Heart left ventricle (tissue), 16 donors: ENCODE measurements at regions of chr22 and their contacts with region 1.

Region 1: GRCh38 chr22:48335442-48336115 is 1492.1 kb downstream of the BRD1 start:
- DNase-seq: no peak
- ATAC-seq: no peak
- H3K4me3 ChIP-seq: no peak overlapping the region
- H3K27ac ChIP-seq: no peak overlapping the region
- H3K4me1 ChIP-seq: no peaks in the 10 kb centered on the region
- H3K27me3 ChIP-seq: peaks cover 0 to 43% (median 0%) of the 10 kb centered on the region in 9 donors
- CTCF ChIP-seq: no peak
- POLR2A ChIP-seq: no peak

Region 2: DNA sequence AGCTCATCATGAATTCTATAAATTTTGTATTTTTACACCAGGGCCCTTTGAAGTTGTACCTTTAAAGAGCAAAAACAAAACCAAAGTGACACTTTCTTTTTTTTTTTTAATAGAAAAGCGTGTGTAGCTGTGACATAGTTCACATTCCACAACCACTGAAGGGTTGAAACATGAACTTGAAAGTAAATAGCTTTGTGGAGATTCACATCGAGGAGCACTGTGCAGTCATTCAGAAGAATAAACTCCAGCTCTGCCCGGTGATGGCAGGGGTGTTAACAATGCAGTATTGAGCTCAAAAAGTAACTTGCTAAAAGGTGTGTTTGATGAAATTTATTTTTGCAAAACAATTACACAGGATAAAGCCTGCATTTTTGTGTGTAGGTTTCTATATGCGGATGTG is 406.9 kb before region 1 on chr22:
- intact Hi-C with region 1: no loop called
- DNase-seq: no peak
- ATAC-seq: no peak
- H3K4me3 ChIP-seq: no peak overlapping the region
- H3K27ac ChIP-seq: no peak overlapping the region
- H3K4me1 ChIP-seq: no peaks in the 10 kb centered on the region
- H3K27me3 ChIP-seq: peaks cover 0 to 3% (median 0%) of the 10 kb centered on the region in 9 donors
- CTCF ChIP-seq: no peak
- POLR2A ChIP-seq: no peak

Region 3: DNA sequence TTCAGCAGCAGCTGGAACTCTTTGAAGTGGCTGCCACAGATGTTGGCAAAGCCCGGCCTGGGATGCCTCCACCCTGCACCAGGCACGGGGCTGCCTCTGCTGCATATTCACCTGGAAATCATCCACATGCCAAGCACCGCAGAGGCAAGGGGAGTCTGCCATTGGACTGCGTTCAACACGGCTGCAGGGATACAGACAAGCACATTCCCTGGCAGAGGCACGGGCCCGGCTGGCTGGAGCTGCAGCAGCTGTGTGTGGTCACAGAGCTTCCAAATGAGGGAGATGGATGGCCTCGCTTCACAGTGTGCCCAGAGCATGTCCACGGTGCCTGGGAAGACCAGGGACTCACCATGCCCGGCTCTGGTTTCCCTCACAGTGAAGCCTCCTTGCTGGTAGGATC is 194.3 kb before region 1 on chr22:
- intact Hi-C with region 1: loop called in 1 of 10 experiments (anchors 10 kb)
- DNase-seq: no peak
- ATAC-seq: no peak
- H3K4me3 ChIP-seq: no peak overlapping the region
- H3K27ac ChIP-seq: no peak overlapping the region
- H3K4me1 ChIP-seq: no peaks in the 10 kb centered on the region
- H3K27me3 ChIP-seq: peaks cover 0 to 25% (median 0%) of the 10 kb centered on the region in 9 donors
- CTCF ChIP-seq: no peak
- POLR2A ChIP-seq: no peak